Right ventricle myocardium superior (tissue), 1 donor: ENCODE measurements at regions of chr1 and their contacts with region 1.

Region 1: DNA sequence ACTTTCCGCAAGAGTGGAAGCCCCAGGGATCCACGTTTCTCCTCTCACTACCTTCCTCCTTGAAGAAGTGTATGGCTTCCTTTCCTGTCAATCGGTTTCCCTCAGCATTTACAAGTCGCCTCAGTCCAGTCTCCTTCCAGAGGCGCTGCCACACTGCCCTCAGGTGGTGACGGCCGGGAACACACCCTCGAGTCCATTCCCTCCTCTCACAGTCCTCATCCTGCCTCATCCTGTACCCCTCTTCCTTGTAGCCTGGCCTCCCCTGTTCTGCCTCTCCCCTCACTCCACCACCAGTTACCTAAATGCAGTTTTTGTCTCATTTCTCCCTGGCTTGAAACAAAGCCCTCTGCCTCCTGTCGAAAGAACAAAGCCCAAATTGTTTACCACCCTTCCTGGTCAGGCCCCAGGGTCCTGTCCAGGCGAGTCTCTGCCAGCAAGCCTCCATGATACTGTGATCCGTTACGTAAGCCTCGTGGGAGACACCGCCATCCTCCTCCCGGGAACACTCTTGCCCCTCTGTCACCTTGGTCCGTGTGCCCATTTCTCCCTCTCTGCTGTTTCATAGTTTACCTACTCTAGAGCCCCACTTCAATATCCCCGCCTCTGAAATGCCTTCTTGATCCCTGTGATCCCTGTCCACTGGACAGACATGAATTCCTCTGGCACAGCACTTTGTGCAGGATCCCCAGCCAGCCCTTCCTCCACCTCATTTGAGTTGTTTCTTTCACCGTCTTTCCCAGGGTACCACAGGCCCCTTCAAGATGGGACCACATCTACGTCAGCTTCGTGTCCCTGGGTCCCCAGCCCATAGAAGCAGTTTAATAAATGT is 23.3 kb upstream of the LSM10 start:
- DNase-seq: peak; percentile 92
- ATAC-seq: peak; percentile 96

Region 2: DNA sequence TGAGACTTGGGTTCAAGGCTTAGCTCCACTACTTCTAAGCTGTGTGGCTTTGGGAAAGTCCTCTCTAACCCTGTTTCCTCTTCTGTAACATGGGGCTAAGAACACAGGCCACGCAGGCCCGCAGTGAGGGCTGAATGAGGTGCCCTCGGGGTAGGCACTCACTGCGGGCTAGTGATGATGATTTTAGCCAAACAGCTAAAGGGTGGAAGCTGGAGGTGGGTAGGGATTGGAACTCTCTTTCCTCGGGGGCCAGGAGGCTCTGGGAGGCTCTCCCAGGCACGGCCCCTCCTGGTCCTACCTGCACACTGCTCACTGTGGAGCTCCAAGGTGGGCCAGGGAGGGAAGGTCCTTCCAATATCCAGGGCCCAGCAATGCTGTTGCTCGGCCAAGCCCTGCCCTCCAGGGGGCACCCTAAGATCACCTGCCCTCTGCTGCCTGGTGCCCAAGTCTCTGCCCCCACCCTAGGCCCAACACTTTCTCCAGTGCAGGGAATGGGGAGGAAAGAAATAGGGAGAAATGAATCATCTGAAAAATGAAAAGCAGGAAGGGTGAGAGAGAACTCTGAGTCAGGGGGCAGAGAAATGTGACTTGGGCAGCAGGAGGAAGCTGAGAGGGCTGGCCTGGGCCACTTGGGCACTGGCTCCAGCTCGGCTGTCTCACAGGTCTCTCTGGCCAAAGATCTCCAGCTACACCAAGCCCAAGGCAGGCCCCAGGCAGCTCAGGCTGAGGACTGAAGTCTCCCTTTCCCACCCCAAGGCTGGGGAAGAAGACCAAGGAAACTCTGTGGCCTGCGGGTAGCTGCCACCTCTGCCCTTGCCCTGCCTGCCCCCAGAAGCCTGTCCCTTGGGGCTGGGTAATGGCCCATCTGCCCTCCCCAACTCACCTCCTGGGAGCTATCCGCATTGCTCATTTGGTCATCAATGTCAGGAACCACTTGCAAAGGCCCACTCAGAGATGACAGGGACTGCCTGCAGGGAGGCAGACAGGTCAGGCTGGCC is 78.3 kb before region 1 on chr1:
- intact Hi-C with region 1: loop called (anchors 1 kb)
- DNase-seq: peak; percentile 75
- ATAC-seq: peak; percentile 67

Region 3: GRCh38 chr1:36691374-36691773 is 270.3 kb after region 1 on chr1:
- intact Hi-C with region 1: no loop called
- DNase-seq: no peak
- ATAC-seq: no peak